Activated B cell treated with CpG ODN at 0.5 μM for 24 hours (primary cell): ENCODE measurements at regions of chr1 and their contacts with region 1.

Region 1: GRCh38 chr1:26602378-26602959 is 72.9 kb downstream of the RPS6KA1 start:
- DNase-seq: no peak
- ATAC-seq: peak; percentile 57
- H3K4me3 Mint-ChIP-seq: no peak overlapping the region
- H3K27ac Mint-ChIP-seq: no peak overlapping the region
- H3K4me1 Mint-ChIP-seq: peaks cover 3% of the 10 kb centered on the region
- H3K27me3 Mint-ChIP-seq: peaks cover 2% of the 10 kb centered on the region
- CTCF ChIP-seq: peak; percentile 83

Region 2: DNA sequence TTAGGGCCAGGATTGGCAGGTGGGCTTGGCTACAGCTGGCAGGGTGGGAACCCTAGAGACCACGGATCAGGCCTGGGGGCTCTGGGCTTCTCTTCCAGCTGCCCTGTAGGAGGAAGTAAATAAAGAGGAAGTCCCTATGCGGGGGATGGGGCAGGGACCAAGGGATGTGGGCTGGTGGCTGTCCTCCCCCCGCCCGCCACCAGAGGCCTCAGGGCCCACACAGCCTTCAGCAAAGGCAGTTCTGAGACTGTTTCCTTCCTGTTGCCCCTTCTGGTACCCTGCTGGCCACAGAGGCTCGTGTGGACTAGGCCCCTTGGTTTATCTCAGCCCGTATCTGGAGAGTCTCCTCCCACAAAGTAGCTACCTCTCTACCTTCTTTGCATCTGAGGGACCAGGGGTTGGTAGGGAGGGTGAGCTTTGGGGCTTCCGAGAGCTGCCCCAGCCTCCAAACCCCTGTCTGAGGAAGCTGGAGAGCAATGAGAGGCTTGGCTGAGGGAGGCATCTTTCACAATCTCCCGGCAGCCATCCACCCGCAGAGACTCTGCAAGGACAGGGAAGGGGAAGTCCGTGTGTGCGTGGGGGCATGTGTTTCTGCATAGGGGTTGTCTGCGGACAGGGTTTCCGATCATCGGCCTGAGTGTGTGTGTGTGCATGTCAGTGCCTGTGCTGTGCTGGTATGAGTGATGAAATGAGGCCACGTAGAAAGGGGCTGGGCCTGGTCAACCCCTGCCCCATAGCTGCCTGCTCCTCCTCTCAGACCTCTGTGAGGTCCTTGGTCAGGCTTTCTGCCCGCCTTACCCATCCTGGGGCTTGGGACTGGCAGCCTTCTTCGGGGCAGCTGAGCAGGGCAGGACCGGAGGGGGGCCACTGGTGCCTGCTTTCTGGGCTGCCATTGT is 60.4 kb before region 1 on chr1:
- CTCF ChIA-PET with region 1: interaction called, 22 read pairs
- POLR2A ChIA-PET with region 1: interaction called, 3 read pairs
- intact Hi-C with region 1: loop called (anchors 1 kb)
- DNase-seq: peak; percentile 72
- ATAC-seq: peak; percentile 62
- H3K4me3 Mint-ChIP-seq: peak overlapping the region; percentile 82
- H3K27ac Mint-ChIP-seq: peak overlapping the region; percentile 99
- H3K4me1 Mint-ChIP-seq: peaks cover 93% of the 10 kb centered on the region
- H3K27me3 Mint-ChIP-seq: no peaks in the 10 kb centered on the region
- CTCF ChIP-seq: no peak

Region 3: DNA sequence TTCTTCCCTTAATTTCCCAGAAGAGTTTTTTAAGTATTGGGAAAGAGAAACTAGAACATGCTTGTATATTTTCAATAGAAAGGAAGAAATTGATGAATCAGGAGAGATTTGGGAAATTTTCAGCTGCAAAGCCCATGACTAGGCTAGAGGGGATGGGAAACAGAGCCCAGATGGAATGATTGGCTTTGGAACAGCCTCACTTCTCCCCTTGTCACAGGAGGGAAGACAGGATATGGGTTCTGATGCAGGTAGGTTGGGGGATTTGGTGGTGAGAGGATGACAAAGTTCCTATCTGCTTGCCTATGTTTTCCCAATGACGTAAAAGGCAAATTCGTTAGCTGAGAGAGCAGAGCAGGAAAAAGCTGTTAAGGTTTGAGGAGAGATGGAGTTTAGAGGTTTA is 62.3 kb after region 1 on chr1:
- CTCF ChIA-PET with region 1: no interaction called
- POLR2A ChIA-PET with region 1: no interaction called
- intact Hi-C with region 1: no loop called
- DNase-seq: no peak
- ATAC-seq: no peak
- H3K4me3 Mint-ChIP-seq: no peak overlapping the region
- H3K27ac Mint-ChIP-seq: no peak overlapping the region
- H3K4me1 Mint-ChIP-seq: no peaks in the 10 kb centered on the region
- H3K27me3 Mint-ChIP-seq: no peaks in the 10 kb centered on the region
- CTCF ChIP-seq: no peak

Region 4: GRCh38 chr1:26677306-26678115 is 75.0 kb after region 1 on chr1:
- CTCF ChIA-PET with region 1: interaction called, 43 read pairs
- POLR2A ChIA-PET with region 1: interaction called, 4 read pairs
- intact Hi-C with region 1: loop called (anchors 1 kb)
- DNase-seq: peak; percentile 32
- ATAC-seq: peak; percentile 99
- H3K4me3 Mint-ChIP-seq: peak overlapping the region; percentile 59
- H3K27ac Mint-ChIP-seq: peak overlapping the region; percentile 83
- H3K4me1 Mint-ChIP-seq: peaks cover 14% of the 10 kb centered on the region
- H3K27me3 Mint-ChIP-seq: no peaks in the 10 kb centered on the region
- CTCF ChIP-seq: no peak

Region 5: GRCh38 chr1:26744075-26744959 is 141.8 kb after region 1 on chr1:
- CTCF ChIA-PET with region 1: interaction called, 11 read pairs
- POLR2A ChIA-PET with region 1: no interaction called
- intact Hi-C with region 1: no loop called
- DNase-seq: peak; percentile 57
- ATAC-seq: peak; percentile 96
- H3K4me3 Mint-ChIP-seq: peak overlapping the region; percentile 79
- H3K27ac Mint-ChIP-seq: peak overlapping the region; percentile 97
- H3K4me1 Mint-ChIP-seq: peaks cover 91% of the 10 kb centered on the region
- H3K27me3 Mint-ChIP-seq: no peaks in the 10 kb centered on the region
- CTCF ChIP-seq: no peak

Region 6: DNA sequence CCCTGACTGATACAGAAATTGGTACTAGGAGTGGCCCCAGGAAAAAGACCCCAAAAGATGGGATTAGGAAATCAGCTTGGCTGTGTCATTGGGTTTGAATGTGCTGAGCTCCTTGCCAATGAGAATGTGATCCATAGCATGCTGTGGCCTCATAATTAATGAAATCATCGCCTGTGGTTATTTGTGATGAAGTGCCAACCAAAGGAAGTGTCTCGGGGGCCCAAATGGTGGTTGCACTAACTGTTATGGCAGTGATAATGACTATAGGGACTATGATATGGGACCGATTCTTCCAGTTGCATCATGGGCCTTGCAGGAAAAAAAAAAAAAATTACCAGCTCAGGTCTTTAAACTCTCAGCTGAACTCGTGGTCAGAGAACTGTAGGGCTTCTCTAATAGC is 208.6 kb after region 1 on chr1:
- CTCF ChIA-PET with region 1: interaction called, 10 read pairs
- POLR2A ChIA-PET with region 1: no interaction called
- intact Hi-C with region 1: no loop called
- DNase-seq: no peak
- ATAC-seq: no peak
- H3K4me3 Mint-ChIP-seq: no peak overlapping the region
- H3K27ac Mint-ChIP-seq: no peak overlapping the region
- H3K4me1 Mint-ChIP-seq: peaks cover 4% of the 10 kb centered on the region
- H3K27me3 Mint-ChIP-seq: peaks cover 1% of the 10 kb centered on the region
- CTCF ChIP-seq: no peak

Region 7: GRCh38 chr1:26877326-26877725 is 274.9 kb after region 1 on chr1:
- CTCF ChIA-PET with region 1: interaction called, 10 read pairs
- POLR2A ChIA-PET with region 1: no interaction called
- intact Hi-C with region 1: loop called (anchors 1 kb)
- DNase-seq: no peak
- ATAC-seq: no peak
- H3K4me3 Mint-ChIP-seq: no peak overlapping the region
- H3K27ac Mint-ChIP-seq: no peak overlapping the region
- H3K4me1 Mint-ChIP-seq: no peaks in the 10 kb centered on the region
- H3K27me3 Mint-ChIP-seq: no peaks in the 10 kb centered on the region
- CTCF ChIP-seq: no peak

Region 8: GRCh38 chr1:26882696-26883463 is 280.4 kb after region 1 on chr1:
- CTCF ChIA-PET with region 1: interaction called, 10 read pairs
- POLR2A ChIA-PET with region 1: no interaction called
- intact Hi-C with region 1: loop called (anchors 1 kb)
- DNase-seq: no peak
- ATAC-seq: no peak
- H3K4me3 Mint-ChIP-seq: no peak overlapping the region
- H3K27ac Mint-ChIP-seq: no peak overlapping the region
- H3K4me1 Mint-ChIP-seq: peaks cover 6% of the 10 kb centered on the region
- H3K27me3 Mint-ChIP-seq: no peaks in the 10 kb centered on the region
- CTCF ChIP-seq: no peak

Region 9: GRCh38 chr1:26932531-26932930 is 330.1 kb after region 1 on chr1:
- CTCF ChIA-PET with region 1: no interaction called
- POLR2A ChIA-PET with region 1: no interaction called
- intact Hi-C with region 1: no loop called
- DNase-seq: no peak
- ATAC-seq: peak; percentile 98
- H3K4me3 Mint-ChIP-seq: peak overlapping the region; percentile 44
- H3K27ac Mint-ChIP-seq: peak overlapping the region; percentile 62
- H3K4me1 Mint-ChIP-seq: peaks cover 13% of the 10 kb centered on the region
- H3K27me3 Mint-ChIP-seq: no peaks in the 10 kb centered on the region
- CTCF ChIP-seq: no peak